ENCODE measurements at regions of chr12 and their contacts with region 1.

Region 1: GRCh38 chr12:25041006-25041741 is 92.3 kb upstream of the BCAT1 start:
- DNase-seq: peak in 1 of 3 donors; percentile 11
- H3K4me3 ChIP-seq: no peak overlapping the region
- H3K27ac ChIP-seq: no peak overlapping the region
- H3K4me1 ChIP-seq: peaks cover 0 to 5% (median 5%) of the 10 kb centered on the region in 4 experiments
- H3K27me3 ChIP-seq: no peaks in the 10 kb centered on the region

Region 2: DNA sequence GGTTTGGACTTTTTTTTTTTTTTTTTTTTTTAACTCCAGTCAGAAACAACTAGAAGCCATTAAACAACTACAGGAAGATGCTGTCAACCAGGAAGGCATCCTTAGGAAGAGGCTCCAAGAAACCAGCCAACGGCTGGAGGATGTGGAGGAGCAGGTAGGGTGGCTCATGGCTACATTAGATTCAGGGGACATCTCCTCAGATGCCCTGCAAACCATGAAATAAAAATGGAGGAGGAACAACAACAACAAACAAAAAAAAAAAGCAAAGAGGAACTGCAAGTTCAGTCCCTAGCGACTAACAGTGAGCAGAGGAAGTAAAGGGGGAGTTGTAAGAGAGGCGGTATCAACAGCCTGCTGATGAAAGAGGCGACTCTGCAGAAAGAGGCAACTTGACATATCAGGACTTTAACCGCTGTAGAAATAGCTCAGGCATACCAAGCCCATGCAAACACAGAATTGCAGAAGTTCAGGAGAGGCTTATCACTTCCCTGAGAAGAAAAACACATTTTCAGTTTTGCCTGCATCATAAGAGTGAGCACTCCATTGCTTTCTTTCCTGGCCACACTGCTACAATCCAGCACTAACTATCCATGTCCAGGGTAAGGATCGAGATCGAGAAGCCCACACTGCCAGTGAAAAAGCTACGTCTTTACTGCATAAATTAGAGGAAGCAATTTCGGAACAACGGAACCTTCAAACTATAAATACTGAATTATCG is 11.2 kb after region 1 on chr12:
- CTCF ChIA-PET with region 1: interaction called, 10 read pairs
- POLR2A ChIA-PET with region 1: interaction called, 7 read pairs
- DNase-seq: peak; percentile 93 to 98 (median 96)
- H3K4me3 ChIP-seq: peak overlapping the region in 6 of 7 experiments; percentile 79 to 99 (median 88)
- H3K27ac ChIP-seq: peak overlapping the region; percentile 78 to 93
- H3K4me1 ChIP-seq: peaks cover 31 to 51% (median 41%) of the 10 kb centered on the region in 4 experiments
- H3K27me3 ChIP-seq: no peaks in the 10 kb centered on the region